Caco-2 (cell line): ENCODE measurements at regions of chr9 and their contacts with region 1.

Region 1: GRCh38 chr9:124415102-124415851 is at the start of gene PSMB7:
- DNase-seq: peak; percentile 96 to 97
- H3K4me3 ChIP-seq: peak within 1 kb of the TSS; percentile 84
- H3K4me3 Mint-ChIP-seq: peak within 1 kb of the TSS; percentile 91
- H3K27ac Mint-ChIP-seq: peak within 1 kb of the TSS; percentile 98
- H3K4me1 ChIP-seq: peaks cover 10% of the 10 kb centered on the region; the same call in 1 of the 2 replicates
- H3K4me1 Mint-ChIP-seq: peaks cover 11% of the 10 kb centered on the region
- H3K27me3 ChIP-seq: no peaks in the 10 kb centered on the region
- H3K27me3 Mint-ChIP-seq: no peaks in the 10 kb centered on the region
- CTCF ChIP-seq: peak; percentile 80 to 86
- total RNA-seq, gene PSMB7: 216 and 238 TPM in 2 replicates

Region 2: GRCh38 chr9:124394596-124394995 is 20.7 kb before region 1 on chr9:
- CTCF ChIA-PET with region 1: interaction called, 11 read pairs
- POLR2A ChIA-PET with region 1: interaction called, 3 read pairs
- intact Hi-C with region 1: no loop called
- DNase-seq: no peak
- H3K4me3 ChIP-seq: no peak overlapping the region
- H3K4me3 Mint-ChIP-seq: no peak overlapping the region
- H3K27ac Mint-ChIP-seq: no peak overlapping the region
- H3K4me1 ChIP-seq: peaks cover 22% of the 10 kb centered on the region
- H3K4me1 Mint-ChIP-seq: peaks cover 18% of the 10 kb centered on the region
- H3K27me3 ChIP-seq: no peaks in the 10 kb centered on the region
- H3K27me3 Mint-ChIP-seq: no peaks in the 10 kb centered on the region
- CTCF ChIP-seq: no peak

Region 3: DNA sequence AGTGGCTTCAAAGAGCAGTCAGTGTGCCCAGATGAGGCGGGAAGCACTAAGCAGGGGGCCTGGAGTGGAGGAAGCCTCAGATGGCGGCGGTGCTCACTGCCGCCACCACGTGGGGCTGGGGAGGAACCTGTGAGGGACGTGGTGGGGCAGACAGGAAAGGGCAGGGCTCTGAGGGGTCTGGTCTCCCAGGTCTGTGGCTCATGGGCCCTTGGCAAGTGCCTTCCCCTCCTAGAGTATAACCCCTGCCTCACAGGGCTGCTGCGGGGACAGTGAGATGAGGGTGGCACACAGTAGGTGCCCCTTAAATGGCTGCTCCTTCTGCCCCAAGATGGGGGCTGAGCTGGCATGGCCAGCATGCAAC is 65.3 kb after region 1 on chr9:
- CTCF ChIA-PET with region 1: interaction called, 8 read pairs
- POLR2A ChIA-PET with region 1: no interaction called
- intact Hi-C with region 1: loop called (anchors 1 kb)
- DNase-seq: peak in 1 of 2 experiments; percentile 42
- H3K4me3 ChIP-seq: no peak overlapping the region
- H3K4me3 Mint-ChIP-seq: no peak overlapping the region
- H3K27ac Mint-ChIP-seq: no peak overlapping the region
- H3K4me1 ChIP-seq: peaks cover 8% of the 10 kb centered on the region; the same call in 1 of the 2 replicates
- H3K4me1 Mint-ChIP-seq: no peaks in the 10 kb centered on the region
- H3K27me3 ChIP-seq: no peaks in the 10 kb centered on the region
- H3K27me3 Mint-ChIP-seq: peaks cover 2% of the 10 kb centered on the region
- CTCF ChIP-seq: peak; percentile 51 to 58

Region 4: DNA sequence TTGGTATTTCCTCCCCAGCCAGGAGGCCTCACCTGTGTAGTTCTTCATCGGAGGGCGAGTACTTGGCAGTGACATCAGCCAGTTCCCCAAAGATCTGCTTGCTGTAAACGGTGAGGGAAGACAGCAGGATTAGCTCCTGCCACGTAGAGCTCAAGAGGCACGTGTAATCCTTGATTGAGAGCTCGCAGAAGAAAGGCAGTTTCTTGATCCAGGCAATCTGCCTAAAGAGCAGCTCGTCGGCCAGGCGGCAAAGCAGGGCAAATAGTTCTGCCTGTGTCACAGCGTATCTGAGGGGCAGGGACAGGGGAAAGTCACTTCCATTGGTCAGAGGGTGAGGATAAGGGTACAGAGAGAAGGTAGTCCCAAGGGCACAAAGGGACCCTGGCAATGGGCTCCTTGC is 120.6 kb after region 1 on chr9:
- CTCF ChIA-PET with region 1: interaction called, 7 read pairs
- POLR2A ChIA-PET with region 1: no interaction called
- intact Hi-C with region 1: loop called (anchors 1 kb)
- DNase-seq: no peak
- H3K4me3 ChIP-seq: no peak overlapping the region
- H3K4me3 Mint-ChIP-seq: no peak overlapping the region
- H3K27ac Mint-ChIP-seq: no peak overlapping the region
- H3K4me1 ChIP-seq: no peaks in the 10 kb centered on the region
- H3K4me1 Mint-ChIP-seq: no peaks in the 10 kb centered on the region
- H3K27me3 ChIP-seq: no peaks in the 10 kb centered on the region
- H3K27me3 Mint-ChIP-seq: no peaks in the 10 kb centered on the region
- CTCF ChIP-seq: no peak